ENCODE measurements at regions of chr1 and their contacts with region 1.

Region 1: DNA sequence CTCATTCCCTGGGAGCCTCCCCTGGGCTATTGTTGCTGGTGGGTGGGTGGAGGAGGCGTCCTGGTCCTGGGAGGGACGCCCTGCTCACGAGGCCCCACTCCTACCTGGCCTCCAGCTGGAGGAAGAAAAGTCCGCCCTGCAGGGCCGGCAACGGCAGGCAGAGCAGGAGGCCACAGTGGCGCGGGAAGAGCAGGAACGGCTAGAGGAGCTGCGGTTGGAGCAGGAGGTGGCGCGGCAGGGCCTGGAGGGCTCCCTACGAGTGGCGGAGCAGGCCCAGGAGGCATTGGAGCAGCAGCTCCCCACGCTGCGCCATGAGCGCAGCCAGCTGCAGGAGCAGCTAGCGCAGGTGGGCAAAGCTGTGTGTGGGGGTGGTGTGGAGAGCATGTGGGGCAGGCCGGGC is 24.9 kb downstream of the CROCC start:
- DNase-seq: no peak

Region 2: DNA sequence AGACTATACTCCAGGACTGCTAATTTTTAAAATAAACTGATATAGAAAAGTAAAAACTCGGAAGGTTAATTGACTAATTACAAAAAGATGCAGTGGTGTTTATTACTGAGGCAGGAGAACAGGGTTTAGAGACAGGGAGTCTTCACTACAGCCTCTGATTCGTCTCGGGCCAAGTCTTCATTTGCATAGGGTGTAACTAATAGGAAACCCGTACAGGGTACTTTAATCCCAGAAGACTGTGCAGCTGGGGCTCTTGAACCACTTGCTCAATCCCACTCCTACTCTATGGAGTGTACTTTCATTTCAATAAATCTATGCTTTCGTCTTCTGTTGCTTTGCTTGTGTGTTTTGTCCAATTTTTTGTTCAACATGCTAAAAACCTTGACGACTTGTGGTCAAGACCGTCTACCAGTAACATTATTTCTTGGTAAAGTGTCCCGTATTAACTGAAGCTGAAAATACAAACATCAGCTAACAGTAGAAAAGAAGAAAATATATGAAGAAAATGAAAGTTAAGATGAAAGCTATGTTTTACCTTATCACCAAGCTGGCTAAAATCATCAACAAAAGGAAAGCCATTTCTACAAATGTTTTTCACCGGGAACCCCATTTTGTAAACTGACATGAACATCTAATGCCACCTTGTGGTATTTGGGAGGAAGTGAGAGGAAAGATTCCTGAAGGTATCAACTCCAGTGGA is 99.1 kb after region 1 on chr1:
- intact Hi-C with region 1: loop called (anchors 2 kb)
- DNase-seq: no peak